ENCODE measurements at regions of chrX and their contacts with region 1.

Region 1: DNA sequence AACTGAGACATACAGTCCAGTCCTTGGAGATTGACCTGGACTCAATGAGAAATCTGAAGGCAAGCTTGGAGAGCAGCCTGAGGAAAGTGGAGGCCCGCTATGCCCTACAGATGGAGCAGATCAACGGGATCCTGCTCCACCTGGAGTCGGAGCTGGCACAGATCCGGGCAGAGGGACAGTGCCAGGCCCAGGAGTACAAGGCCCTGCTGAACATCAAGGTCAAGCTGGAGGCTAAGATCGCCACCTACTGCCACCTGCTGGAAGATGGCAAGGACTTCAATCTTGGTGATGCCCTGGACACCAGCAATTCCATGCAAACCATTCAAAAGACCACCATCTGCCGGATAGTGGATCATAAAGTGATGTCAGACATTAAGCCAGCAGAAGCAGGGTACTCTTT is 20.4 kb upstream of the FRMPD3 start:
- DNase-seq: no peak
- H3K4me3 ChIP-seq: no peak overlapping the region
- H3K27ac ChIP-seq: no peak overlapping the region
- H3K27me3 ChIP-seq: no peaks in the 10 kb centered on the region
- CTCF ChIP-seq: peak; percentile 17; the same call in 1 of the 2 replicates

Region 2: GRCh38 chrX:107398115-107398514 is 31.0 kb before region 1 on chrX:
- CTCF ChIA-PET with region 1: no interaction called
- POLR2A ChIA-PET with region 1: no interaction called
- DNase-seq: no peak
- H3K4me3 ChIP-seq: no peak overlapping the region
- H3K27ac ChIP-seq: no peak overlapping the region
- H3K27me3 ChIP-seq: no peaks in the 10 kb centered on the region
- CTCF ChIP-seq: no peak

Region 3: GRCh38 chrX:107521877-107522586 is 92.9 kb after region 1 on chrX:
- CTCF ChIA-PET with region 1: interaction called, 11 read pairs
- POLR2A ChIA-PET with region 1: no interaction called
- DNase-seq: no peak
- H3K4me3 ChIP-seq: no peak overlapping the region
- H3K27ac ChIP-seq: no peak overlapping the region
- H3K27me3 ChIP-seq: peaks cover 2% of the 10 kb centered on the region
- CTCF ChIP-seq: no peak

Measured in AG04450 (cell line).